ENCODE measurements at regions of chr17 and their contacts with region 1.

Region 1: DNA sequence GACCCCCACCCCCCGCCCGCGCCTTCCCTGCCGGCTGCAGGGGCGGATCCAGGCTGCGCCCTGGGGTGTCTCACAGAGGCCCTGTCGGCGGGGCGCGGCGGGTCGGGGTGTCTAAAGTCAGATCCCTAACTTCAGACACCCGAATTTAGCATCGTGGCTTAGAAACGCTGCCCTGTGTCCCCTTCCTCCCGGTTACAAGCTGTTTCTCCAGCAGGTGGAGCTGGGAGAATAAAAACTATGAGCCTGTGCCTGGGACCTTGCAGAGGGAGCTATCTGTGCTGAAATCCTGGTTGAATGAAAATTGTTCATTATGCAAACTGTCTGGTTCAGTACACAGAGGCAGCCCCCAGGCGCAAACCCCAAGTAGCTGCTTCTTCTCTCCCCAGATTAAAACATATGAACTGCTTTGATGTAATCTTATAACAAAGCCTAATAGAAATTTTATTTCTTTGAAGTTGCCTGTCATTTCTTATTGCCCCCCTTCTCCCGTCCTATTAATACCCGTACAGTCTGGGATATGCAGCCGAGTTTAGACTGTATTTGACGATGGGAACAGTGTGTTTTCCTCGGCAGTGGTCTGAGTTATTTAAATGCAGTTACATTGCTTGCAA is 79.0 kb downstream of the RPA1 start:
- DNase-seq: no peak
- H3K4me3 ChIP-seq: no peak overlapping the region
- H3K4me3 Mint-ChIP-seq: peak overlapping the region in 1 of 2 donors; percentile 75
- H3K27ac ChIP-seq: no peak overlapping the region
- H3K27ac Mint-ChIP-seq: no peak overlapping the region
- H3K4me1 ChIP-seq: peaks cover 4 to 9% of the 10 kb centered on the region in 2 donors
- H3K4me1 Mint-ChIP-seq: peaks cover 9% of the 10 kb centered on the region
- H3K27me3 ChIP-seq: peaks cover 54 to 66% of the 10 kb centered on the region in 2 donors
- H3K27me3 Mint-ChIP-seq: peaks cover 65 to 90% (median 79%) of the 10 kb centered on the region in 3 donors
- CTCF ChIP-seq: no peak

Region 2: DNA sequence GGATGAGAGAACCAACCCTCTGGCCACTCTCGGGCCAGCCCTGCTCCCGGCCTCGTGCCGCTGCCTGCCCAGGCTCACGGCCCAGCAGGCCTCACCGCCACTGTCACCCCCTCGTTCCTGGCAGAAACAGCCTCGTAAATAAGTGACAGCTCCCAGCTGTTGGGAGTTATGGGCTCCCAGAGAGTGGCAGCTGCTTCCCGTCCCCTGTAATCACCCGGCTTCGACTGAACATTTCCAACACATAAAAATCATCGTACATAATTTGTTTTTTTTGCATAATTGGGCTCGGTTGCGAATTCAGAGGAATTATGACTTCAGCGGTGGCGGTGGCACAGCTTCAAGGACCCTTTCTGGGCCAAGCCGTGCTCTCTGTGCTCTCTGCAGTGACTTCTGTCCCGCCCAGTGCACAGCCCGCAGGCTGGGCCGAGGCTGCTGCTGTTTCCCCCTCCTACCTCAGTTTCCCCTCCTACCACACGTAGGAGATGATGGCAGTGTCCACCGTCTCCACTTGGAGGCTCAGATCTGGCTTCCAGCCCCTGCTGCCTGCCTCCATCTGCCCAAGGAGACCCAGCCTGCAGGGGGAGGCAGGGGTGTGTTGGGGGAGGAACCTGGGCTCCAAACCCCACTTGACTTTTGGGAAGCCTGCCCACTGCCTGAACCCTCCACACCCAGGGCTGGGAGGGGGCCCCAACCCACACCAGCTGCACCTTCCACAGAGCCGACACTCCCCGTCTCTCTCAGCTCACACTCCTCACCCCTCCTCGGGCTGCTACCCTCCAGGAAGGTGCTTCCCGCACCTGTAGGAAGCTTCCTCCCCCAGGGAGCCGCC is 31.4 kb after region 1 on chr17:
- intact Hi-C with region 1: no loop called
- DNase-seq: no peak
- H3K4me3 ChIP-seq: no peak overlapping the region
- H3K4me3 Mint-ChIP-seq: no peak overlapping the region
- H3K27ac ChIP-seq: no peak overlapping the region
- H3K27ac Mint-ChIP-seq: no peak overlapping the region
- H3K4me1 ChIP-seq: no peaks in the 10 kb centered on the region
- H3K4me1 Mint-ChIP-seq: no peaks in the 10 kb centered on the region
- H3K27me3 ChIP-seq: no peaks in the 10 kb centered on the region
- H3K27me3 Mint-ChIP-seq: peaks cover 0 to 11% (median 3%) of the 10 kb centered on the region in 3 donors
- CTCF ChIP-seq: no peak

Region 3: DNA sequence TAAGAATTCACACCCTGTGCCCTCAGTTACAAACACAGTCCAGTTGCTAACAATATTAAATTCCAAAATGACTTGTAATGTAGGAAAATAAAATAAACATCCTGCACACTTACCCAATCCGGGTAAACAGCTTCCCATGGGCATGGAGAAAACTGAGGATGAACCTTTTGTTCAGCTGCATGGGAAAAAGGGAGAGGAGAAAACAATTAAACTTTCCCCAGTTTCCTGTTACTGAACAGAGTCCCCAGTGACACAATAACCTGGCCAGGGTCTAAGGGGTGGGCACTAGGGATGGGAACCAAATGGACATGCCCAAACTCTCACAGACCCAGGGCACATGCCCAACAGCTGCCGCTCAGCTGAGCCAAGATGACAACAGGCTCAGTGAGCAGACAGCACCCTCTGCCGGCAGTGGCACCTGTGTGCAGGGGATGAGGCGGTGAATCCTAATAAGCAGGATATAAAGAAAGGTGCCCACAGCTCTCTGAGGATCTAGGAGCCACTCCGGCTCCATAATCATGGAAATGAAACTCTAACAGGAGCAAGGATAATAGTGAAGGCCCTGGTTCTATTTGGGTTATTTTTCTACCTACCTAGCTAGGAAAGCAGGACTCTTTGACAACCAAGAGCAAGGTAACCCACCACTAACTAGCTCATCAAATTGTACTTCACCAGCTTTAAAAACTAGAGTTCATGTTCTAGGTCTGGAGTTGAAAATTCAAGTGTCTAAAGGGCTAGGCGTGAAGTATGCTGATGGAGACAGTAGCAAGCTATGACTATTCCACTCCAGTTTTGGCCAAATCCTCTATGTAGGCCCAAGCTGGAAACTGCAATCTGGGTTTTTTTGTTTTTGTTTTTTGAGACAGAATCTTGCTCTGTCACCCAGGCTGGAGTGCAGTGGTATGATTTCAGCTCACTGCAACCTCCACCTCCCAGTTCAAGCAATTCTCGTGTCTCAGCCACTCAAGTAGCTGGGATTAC is 336.0 kb after region 1 on chr17:
- intact Hi-C with region 1: loop called in 1 of 2 experiments (anchors 10 kb)
- DNase-seq: peak; percentile 68 to 79 (median 77)
- H3K4me3 ChIP-seq: no peak overlapping the region
- H3K4me3 Mint-ChIP-seq: no peak overlapping the region
- H3K27ac ChIP-seq: no peak overlapping the region
- H3K27ac Mint-ChIP-seq: no peak overlapping the region
- H3K4me1 ChIP-seq: no peaks in the 10 kb centered on the region
- H3K4me1 Mint-ChIP-seq: no peaks in the 10 kb centered on the region
- H3K27me3 ChIP-seq: no peaks in the 10 kb centered on the region
- H3K27me3 Mint-ChIP-seq: no peaks in the 10 kb centered on the region
- CTCF ChIP-seq: peak; percentile 93

Measured in CD14-positive monocyte (primary cell).